B cell (primary cell): ENCODE measurements at regions of chr4 and their contacts with region 1.

Region 1: DNA sequence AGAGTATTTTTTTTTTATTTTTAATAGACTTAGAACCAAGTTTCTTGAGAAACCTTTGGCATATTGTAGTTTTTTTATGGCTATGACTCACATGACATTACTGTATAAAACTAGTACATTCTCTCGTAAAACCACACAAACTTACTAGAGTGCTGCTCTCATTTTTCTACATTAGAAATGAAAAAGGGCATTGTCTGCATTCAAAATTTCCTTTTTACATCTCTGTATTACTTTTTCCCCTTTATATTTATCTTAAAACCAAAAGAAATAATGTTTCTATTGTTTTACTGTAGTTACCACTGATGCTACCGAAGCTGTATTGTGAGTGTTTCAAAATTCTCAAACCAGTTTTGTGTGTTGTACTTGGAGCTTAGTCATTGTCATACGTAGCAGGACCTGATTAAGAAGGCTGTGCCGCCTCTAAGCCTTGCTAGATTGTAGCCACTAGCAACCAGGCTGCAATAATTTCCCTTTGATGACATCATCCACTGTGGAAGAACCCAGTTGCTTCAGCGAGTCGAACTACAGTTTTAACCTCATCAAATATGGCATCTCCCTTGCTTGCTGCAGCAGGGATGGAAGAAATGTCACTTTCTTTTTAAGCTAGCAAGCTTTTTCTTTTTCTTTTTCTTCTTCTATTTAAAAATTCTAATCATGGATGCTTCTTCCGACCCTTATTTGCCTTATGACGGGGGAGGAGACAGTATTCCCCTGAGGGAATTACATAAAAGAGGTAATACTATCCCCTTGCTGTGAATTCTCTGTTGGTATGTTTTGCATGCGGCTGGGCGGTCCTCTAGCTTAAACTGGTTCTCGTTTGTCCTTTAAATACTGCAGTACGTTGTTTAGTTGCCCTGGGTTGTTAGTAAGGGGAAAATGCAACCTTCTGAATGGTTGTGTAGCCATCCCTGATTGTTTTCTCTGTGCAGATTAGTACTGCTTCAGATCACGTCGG is 39.6 kb downstream of the CLCN3 start:
- DNase-seq: peak; percentile 91
- ATAC-seq: peak; percentile 90
- H3K4me3 ChIP-seq: peak overlapping the region; percentile 42 to 75 (median 60)
- H3K4me3 Mint-ChIP-seq: peak overlapping the region; percentile 85
- H3K27ac ChIP-seq: peak overlapping the region; percentile 90 to 92
- H3K27ac Mint-ChIP-seq: peak overlapping the region; percentile 90
- H3K4me1 ChIP-seq: peaks cover 2 to 6% of the 10 kb centered on the region in 2 donors
- H3K4me1 Mint-ChIP-seq: peaks cover 23% of the 10 kb centered on the region
- H3K27me3 ChIP-seq: no peaks in the 10 kb centered on the region
- H3K27me3 Mint-ChIP-seq: no peaks in the 10 kb centered on the region
- CTCF ChIP-seq: no peak

Region 2: GRCh38 chr4:169640261-169640870 is 19.6 kb before region 1 on chr4:
- CTCF ChIA-PET with region 1: no interaction called
- POLR2A ChIA-PET with region 1: no interaction called
- intact Hi-C with region 1: no loop called
- DNase-seq: no peak
- ATAC-seq: no peak
- H3K4me3 ChIP-seq: no peak overlapping the region
- H3K4me3 Mint-ChIP-seq: no peak overlapping the region
- H3K27ac ChIP-seq: no peak overlapping the region
- H3K27ac Mint-ChIP-seq: no peak overlapping the region
- H3K4me1 ChIP-seq: no peaks in the 10 kb centered on the region
- H3K4me1 Mint-ChIP-seq: no peaks in the 10 kb centered on the region
- H3K27me3 ChIP-seq: no peaks in the 10 kb centered on the region
- H3K27me3 Mint-ChIP-seq: no peaks in the 10 kb centered on the region
- CTCF ChIP-seq: no peak

Region 3: GRCh38 chr4:169757575-169758184 is 97.7 kb after region 1 on chr4 and contains the start of gene HPF1:
- CTCF ChIA-PET with region 1: no interaction called
- POLR2A ChIA-PET with region 1: no interaction called
- intact Hi-C with region 1: loop called (anchors 1 kb)
- DNase-seq: peak; percentile 94
- ATAC-seq: peak; percentile 99
- H3K4me3 ChIP-seq: peak within 1 kb of the TSS; percentile 50 to 91 (median 86)
- H3K4me3 Mint-ChIP-seq: peak within 1 kb of the TSS; percentile 96
- H3K27ac ChIP-seq: peak within 1 kb of the TSS; percentile 1 to 50
- H3K27ac Mint-ChIP-seq: peak within 1 kb of the TSS; percentile 79
- H3K4me1 ChIP-seq: peaks cover 14 to 20% of the 10 kb centered on the region in 2 donors
- H3K4me1 Mint-ChIP-seq: peaks cover 21% of the 10 kb centered on the region
- H3K27me3 ChIP-seq: no peaks in the 10 kb centered on the region
- H3K27me3 Mint-ChIP-seq: no peaks in the 10 kb centered on the region
- CTCF ChIP-seq: no peak
- total RNA-seq, gene HPF1: 9.9 and 15.2 TPM in 2 replicates